Left cardiac atrium (tissue), 4 donors: ENCODE measurements at regions of chr18 and their contacts with region 1.

Region 1: GRCh38 chr18:4106407-4107033 is 348.6 kb downstream of the DLGAP1 start:
- DNase-seq: peak; percentile 57
- ATAC-seq: peak in 1 of 2 donors; percentile 63

Region 2: GRCh38 chr18:3447895-3448837 is 658.4 kb before region 1 on chr18:
- intact Hi-C with region 1: no loop called
- DNase-seq: peak; percentile 95
- ATAC-seq: peak; percentile 78 to 82

Region 3: DNA sequence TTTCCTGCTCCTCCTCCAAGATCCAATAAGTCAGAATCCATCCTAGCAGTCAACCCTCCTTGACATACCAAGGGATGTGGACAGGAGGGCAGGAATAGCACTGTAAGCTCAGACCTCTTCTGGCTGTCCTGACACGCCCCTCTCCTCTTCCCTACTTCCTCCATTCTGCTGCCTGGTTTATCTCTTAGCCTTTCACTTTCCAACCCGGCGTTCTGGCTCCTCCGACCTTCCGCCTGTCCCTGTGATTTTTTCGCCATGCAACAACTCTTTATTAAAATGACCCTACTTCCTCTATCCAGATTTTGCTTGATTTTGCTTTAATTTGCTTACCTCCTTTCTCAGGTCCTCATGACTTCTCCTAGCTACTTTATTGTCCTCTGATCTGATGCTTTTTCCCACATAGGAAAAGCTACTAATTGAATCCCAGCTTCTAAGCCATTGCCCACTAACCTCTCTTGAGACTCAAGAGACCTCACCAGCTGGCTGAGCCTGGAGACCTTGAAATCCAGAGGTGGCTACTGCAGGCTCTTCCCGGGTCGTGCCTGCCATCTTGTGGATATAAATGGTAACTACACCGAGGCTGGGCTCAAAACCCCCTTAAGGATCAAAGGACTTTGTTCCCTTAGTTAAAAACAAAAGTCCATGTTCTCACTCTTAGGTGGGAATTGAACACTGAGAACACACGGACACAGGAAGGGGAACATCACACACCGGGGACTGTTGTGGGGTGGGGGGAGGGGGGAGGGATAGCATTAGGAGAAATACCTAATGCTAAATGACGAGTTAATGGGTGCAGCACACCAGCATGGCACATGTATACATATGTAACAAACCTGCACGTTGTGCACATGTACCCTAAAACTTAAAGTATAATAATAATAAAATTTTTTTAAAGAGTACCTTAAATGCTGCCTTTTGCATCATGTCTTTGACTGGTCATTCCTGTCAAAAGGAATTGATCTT is 951.1 kb after region 1 on chr18:
- intact Hi-C with region 1: loop called (anchors 5 kb)
- DNase-seq: peak; percentile 43
- ATAC-seq: peak in 1 of 2 donors; percentile 83